Activated T-helper 1 cell treated with anti-CD3 and anti-CD28 coated beads, Interleukin-12 subunit alpha, Interleukin-12 subunit beta, Interleukin-2, Interleukin-4 antibody, amounts not matched to agents 30 ng/mL and 10 ng/mL and 1 ng/mL, durations not matched to agents 14 hours and 24 hours and 36 hours (primary cell): ENCODE measurements at regions of chr15 and their contacts with region 1.

Region 1: GRCh38 chr15:77821188-77821958 is 188.7 kb upstream of the LINGO1 start:
- DNase-seq: no peak
- H3K4me3 Mint-ChIP-seq: no peak overlapping the region
- H3K27ac Mint-ChIP-seq: no peak overlapping the region
- H3K4me1 Mint-ChIP-seq: no peaks in the 10 kb centered on the region
- H3K27me3 Mint-ChIP-seq: peaks cover 33% of the 10 kb centered on the region

Region 2: GRCh38 chr15:77634266-77634962 is 187.0 kb before region 1 on chr15:
- intact Hi-C with region 1: loop called (anchors 1 kb)
- DNase-seq: peak; percentile 38
- H3K4me3 Mint-ChIP-seq: peak overlapping the region; percentile 43
- H3K27ac Mint-ChIP-seq: no peak overlapping the region
- H3K4me1 Mint-ChIP-seq: peaks cover 10% of the 10 kb centered on the region
- H3K27me3 Mint-ChIP-seq: peaks cover 46% of the 10 kb centered on the region